Colonic mucosa (tissue), 4 donors: ENCODE measurements at regions of chr15 and their contacts with region 1.

Region 1: GRCh38 chr15:85840065-85840801 is 45.5 kb upstream of the KLHL25 start:
- DNase-seq: peak; percentile 97
- H3K4me3 ChIP-seq: peak overlapping the region; percentile 6
- H3K27ac ChIP-seq: peak overlapping the region; percentile 38
- H3K4me1 ChIP-seq: peaks cover 9% of the 10 kb centered on the region
- H3K27me3 ChIP-seq: no peaks in the 10 kb centered on the region
- CTCF ChIP-seq: peak; percentile 87

Region 2: DNA sequence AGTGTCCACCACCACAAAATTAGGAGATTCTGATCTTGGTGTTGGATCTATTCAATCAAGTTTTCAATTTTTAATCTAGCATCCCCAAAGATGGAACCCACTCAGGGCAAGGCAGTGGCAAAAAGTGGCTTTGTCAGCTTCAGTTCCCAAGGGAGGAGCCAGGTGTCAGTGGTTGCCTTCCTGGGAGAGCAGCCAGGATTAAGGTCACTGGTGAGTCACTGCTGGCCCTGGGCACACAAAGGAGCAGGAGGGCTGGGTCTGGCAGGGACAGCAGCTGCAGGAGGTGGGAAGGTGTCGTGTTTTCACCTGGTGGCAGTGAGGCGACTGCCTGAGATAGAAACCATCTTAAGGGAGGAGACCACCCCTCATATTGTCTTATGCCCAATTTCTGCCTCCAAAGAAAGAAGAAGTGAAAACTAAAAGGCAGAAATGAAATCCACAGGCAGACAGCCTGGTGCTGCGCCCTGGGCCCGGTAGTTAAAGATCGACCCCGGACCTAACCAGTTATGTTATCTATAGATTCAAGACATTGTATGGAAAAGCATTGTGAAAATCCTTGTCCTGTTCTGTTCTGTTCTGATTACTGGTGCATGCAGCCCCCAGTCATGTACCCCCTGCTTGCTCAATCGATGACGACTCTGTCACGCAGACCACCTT is 39.6 kb before region 1 on chr15:
- intact Hi-C with region 1: loop called (anchors 5 kb)
- DNase-seq: peak; percentile 90
- H3K4me3 ChIP-seq: no peak overlapping the region
- H3K27ac ChIP-seq: no peak overlapping the region
- H3K4me1 ChIP-seq: peaks cover 6% of the 10 kb centered on the region
- H3K27me3 ChIP-seq: no peaks in the 10 kb centered on the region
- CTCF ChIP-seq: peak; percentile 47

Region 3: DNA sequence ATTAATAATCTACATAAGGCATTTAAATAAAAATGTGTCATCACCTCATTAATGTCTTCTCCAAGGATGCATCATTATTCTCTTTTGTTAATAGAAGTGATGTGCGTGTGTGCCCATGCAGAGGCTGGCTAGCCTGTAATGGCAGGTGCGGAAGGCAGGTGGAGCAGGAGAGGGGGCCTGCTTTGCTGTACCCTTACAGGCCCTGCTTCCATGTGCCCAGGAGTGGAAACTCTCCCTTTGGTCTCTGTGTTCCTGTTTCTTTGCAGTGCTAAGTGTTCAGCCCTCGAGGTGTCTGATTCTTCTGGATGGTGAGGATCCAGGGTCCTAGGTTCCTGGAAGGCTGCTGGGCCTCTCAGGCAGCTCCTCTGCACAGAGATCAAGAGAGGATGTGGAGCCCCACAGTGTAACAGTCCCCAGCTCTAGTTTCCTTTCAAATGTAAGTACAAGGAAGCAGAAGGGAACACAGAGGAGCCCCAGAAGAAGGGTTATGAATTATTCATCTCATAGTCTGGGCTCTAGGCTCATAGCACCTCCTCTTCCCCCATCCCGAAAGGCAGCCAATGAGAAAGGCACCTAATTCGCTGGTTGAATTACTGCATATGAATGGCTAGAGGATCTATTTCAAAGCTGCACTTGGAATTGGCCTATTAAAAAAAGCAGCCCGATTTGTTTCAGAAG is 200.3 kb after region 1 on chr15:
- intact Hi-C with region 1: no loop called
- DNase-seq: no peak
- H3K4me3 ChIP-seq: no peak overlapping the region
- H3K27ac ChIP-seq: no peak overlapping the region
- H3K4me1 ChIP-seq: no peaks in the 10 kb centered on the region
- H3K27me3 ChIP-seq: no peaks in the 10 kb centered on the region
- CTCF ChIP-seq: no peak